Sigmoid colon (tissue), 7 donors: ENCODE measurements at regions of chr7 and their contacts with region 1.

Region 1: DNA sequence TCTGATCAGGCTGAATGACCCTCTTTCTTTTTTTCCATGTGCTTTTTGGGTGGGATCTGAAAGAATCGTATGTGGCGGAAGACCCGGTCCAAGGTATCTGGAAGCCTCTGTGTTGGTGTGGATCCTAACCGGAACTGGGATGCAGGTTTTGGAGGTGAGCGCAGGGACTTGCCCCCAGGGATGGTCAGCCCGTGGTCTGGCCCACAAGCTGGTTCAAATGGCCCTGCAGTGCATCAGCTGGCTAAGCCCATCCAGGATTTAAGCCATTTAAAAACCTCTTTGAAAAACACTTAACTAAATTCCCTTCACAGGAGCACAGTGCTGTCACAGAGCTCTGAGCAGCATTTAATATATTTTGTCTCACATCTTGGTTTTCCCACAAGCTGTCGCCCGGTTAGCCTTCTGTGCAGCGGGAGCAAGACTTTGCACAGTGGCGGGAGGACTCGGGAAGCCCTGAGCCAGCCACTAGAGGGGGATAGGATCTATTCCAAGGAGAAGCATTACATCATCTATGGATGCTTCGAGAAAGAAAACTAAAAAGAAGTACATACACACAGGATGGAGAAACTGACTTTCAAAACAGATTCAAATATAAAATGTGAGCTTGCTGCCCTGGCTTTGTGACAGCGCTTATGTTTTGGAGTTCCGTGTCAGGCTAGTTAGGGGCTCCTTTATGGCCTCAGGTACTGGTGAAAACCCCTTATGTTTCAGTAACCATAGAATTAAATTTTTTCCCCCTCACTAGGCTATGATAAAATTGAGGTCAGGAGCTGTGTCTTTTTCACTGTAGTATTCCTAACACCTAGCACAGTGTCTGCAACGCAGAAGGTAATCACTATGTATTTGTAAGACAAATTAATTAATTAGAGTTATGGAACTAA is 11.3 kb downstream of the CPA2 start:
- DNase-seq: peak; percentile 81
- H3K4me3 ChIP-seq: no peak overlapping the region
- H3K27ac ChIP-seq: peak overlapping the region in 1 of 4 donors; percentile 59
- H3K4me1 ChIP-seq: peaks cover 0 to 23% (median 10%) of the 10 kb centered on the region in 4 donors
- H3K27me3 ChIP-seq: peaks cover 0 to 6% (median 0%) of the 10 kb centered on the region in 3 donors
- CTCF ChIP-seq: peak in 3 of 4 experiments; percentile 42 to 66 (median 64)
- EP300 ChIP-seq: no peak
- POLR2A ChIP-seq: no peak

Region 2: GRCh38 chr7:130490888-130491804 is 213.1 kb after region 1 on chr7:
- intact Hi-C with region 1: loop called (anchors 2 kb)
- DNase-seq: peak; percentile 78
- H3K4me3 ChIP-seq: peak overlapping the region; percentile 14 to 53 (median 44)
- H3K27ac ChIP-seq: peak overlapping the region in 3 of 4 donors; percentile 0 to 64 (median 60)
- H3K4me1 ChIP-seq: peaks cover 0 to 33% (median 31%) of the 10 kb centered on the region in 4 donors
- H3K27me3 ChIP-seq: peaks cover 10 to 52% (median 14%) of the 10 kb centered on the region in 3 donors
- CTCF ChIP-seq: peak; percentile 17 to 56 (median 46)
- EP300 ChIP-seq: no peak
- POLR2A ChIP-seq: no peak

Region 3: DNA sequence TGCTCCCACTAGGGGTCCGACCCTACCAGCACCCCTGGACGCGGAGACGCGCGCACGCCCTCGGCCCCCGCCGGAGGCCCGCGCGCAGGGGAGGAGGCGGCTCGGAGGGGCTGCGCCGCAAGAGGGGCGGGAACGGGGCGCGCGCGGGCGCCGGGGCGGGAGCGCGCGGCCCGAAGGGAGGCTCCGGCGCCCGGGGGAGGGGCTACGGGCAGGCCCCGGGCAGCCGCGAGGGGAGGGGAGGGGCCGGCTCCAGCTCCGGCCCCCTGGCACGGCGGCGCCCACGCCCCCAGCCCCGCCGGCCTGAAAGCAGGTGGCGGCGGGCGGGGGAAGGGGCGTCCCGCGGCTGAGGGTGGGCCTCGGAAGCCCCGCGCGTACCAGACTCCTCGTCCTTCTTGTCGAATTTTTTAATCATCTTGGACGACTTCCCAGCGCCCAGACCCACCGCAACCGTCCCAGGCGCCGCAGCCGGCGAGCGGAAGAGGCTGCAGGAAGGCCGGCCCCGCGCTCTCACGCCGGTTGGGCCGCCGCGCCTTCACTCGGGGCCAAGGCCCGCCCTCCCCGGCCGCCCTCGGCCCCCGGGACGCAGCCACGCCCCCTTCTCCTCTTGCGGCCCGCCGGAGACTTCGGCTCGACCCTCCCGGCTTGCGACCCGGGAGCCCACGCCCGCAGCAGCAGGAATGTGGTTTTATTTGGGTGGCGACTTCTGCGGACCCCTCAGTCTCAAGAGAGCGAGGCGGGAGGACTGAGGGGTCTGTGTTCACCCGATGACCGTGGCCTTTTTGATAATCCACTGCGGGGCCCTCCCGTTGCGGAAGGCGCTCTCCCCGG is 390.5 kb after region 1 on chr7 and contains the start of gene COPG2:
- intact Hi-C with region 1: loop called (anchors 5 kb)
- DNase-seq: peak; percentile 88
- H3K4me3 ChIP-seq: peak within 1 kb of the TSS; percentile 71 to 91 (median 77)
- H3K27ac ChIP-seq: peak within 1 kb of the TSS; percentile 83 to 88 (median 84)
- H3K4me1 ChIP-seq: peaks cover 0 to 16% (median 6%) of the 10 kb centered on the region in 4 donors
- H3K27me3 ChIP-seq: no peaks in the 10 kb centered on the region
- CTCF ChIP-seq: no peak
- EP300 ChIP-seq: no peak
- POLR2A ChIP-seq: no peak
- total RNA-seq, gene COPG2: 11.7 to 15.5 (median 12.8) TPM